Naive thymus-derived CD8-positive, alpha-beta T cell (primary cell): ENCODE measurements at regions of chr19 and their contacts with region 1.

Region 1: GRCh38 chr19:18000935-18001778 is 6.8 kb upstream of the ARRDC2 start:
- DNase-seq: peak; percentile 89 to 98 (median 96)
- ATAC-seq: peak; percentile 83
- H3K4me3 Mint-ChIP-seq: peak overlapping the region; percentile 86 to 96 (median 92)
- H3K27ac Mint-ChIP-seq: peak overlapping the region; percentile 97 to 100 (median 99)
- H3K4me1 Mint-ChIP-seq: peaks cover 9 to 38% (median 29%) of the 10 kb centered on the region in 4 donors
- H3K27me3 Mint-ChIP-seq: no peaks in the 10 kb centered on the region

Region 2: DNA sequence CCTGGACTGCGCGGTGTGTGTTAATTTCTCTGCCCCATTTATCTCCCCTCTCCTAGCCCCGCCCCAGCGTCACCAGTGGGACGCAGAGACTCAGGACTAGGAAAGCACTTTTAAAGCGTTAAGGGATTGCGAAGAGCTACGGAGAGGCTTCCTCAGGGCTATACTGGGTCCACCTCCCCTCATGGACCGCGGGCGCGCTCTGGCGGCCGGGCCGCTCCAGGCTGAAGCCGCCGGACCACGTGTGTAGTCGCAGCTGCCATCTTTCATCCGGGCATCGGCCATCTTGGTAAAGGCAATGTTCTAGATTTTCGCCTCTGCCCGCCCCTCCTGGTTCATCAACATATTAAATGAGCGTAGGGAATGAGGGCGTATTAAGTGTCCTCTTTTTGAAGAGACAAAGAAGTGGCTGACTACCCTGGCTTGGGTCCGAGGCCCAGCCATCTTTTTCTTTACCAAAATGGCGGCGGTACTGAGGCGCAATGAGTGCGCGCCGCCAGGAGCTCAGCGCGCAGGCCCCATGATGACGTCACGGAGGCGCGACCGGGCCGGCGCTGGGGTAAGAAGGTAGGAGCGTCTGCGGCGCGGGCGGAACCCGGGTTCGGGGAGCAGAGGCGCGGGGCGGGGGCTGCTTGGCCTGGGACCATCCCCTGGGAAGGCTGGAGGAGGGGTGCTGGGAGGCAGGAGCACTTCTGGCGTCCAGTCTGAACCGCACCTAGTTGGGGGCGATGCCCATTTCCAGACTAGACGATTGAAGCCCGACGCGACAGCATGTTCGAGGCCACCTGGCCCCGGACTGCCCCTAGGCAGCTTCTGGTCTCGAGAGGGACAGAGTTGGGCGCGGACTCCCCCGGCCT is 68.4 kb before region 1 on chr19 and contains the start of gene CCDC124:
- POLR2A ChIA-PET with region 1: interaction called, 37 read pairs
- DNase-seq: peak; percentile 87 to 96 (median 91)
- ATAC-seq: peak; percentile 97
- H3K4me3 Mint-ChIP-seq: peak within 1 kb of the TSS; percentile 86 to 97 (median 93)
- H3K27ac Mint-ChIP-seq: peak within 1 kb of the TSS; percentile 85 to 99 (median 97)
- H3K4me1 Mint-ChIP-seq: peaks cover 6 to 29% (median 23%) of the 10 kb centered on the region in 4 donors
- H3K27me3 Mint-ChIP-seq: peaks cover 0 to 3% (median 0%) of the 10 kb centered on the region in 5 donors
- polyA plus RNA-seq, gene CCDC124: 36.4 to 53.6 (median 43.5) TPM

Region 3: GRCh38 chr19:17947815-17948513 is 53.2 kb before region 1 on chr19:
- POLR2A ChIA-PET with region 1: interaction called, 20 read pairs
- DNase-seq: peak; percentile 89 to 99 (median 95)
- ATAC-seq: peak; percentile 58 to 71
- H3K4me3 Mint-ChIP-seq: peak overlapping the region; percentile 63 to 91 (median 80)
- H3K27ac Mint-ChIP-seq: peak overlapping the region in 7 of 10 donors; percentile 60 to 99 (median 92)
- H3K4me1 Mint-ChIP-seq: peaks cover 25 to 61% (median 50%) of the 10 kb centered on the region in 4 donors
- H3K27me3 Mint-ChIP-seq: peaks cover 11 to 36% (median 23%) of the 10 kb centered on the region in 5 donors

Region 4: GRCh38 chr19:18044825-18045304 is 43.7 kb after region 1 on chr19:
- POLR2A ChIA-PET with region 1: interaction called, 267 read pairs
- DNase-seq: peak; percentile 61 to 91 (median 80)
- ATAC-seq: peak; percentile 97 to 99
- H3K4me3 Mint-ChIP-seq: peak overlapping the region; percentile 77 to 89 (median 84)
- H3K27ac Mint-ChIP-seq: peak overlapping the region; percentile 87 to 99 (median 95)
- H3K4me1 Mint-ChIP-seq: peaks cover 19 to 55% (median 49%) of the 10 kb centered on the region in 4 donors
- H3K27me3 Mint-ChIP-seq: no peaks in the 10 kb centered on the region

Region 5: DNA sequence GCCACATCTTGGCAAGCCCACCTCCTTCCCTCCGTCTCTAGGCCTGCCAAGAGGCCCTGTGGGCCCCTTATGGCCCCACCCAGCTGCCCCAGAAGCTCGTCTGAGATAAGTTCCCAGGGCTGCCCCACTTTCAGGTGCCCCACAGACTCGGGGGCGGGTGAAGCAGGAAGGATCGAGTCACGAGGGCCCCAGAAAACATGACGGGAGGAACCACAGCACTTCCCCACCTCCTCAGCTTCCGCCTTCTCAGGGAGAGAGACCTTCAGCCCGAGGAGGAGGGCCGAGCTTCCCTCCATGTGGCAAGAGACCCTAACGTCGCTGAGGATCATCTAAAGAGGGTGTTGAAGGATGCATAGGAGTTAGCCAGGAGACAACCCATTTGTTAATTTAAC is 90.1 kb after region 1 on chr19:
- POLR2A ChIA-PET with region 1: interaction called, 27 read pairs
- DNase-seq: peak; percentile 64 to 91 (median 76)
- ATAC-seq: peak; percentile 75 to 78
- H3K4me3 Mint-ChIP-seq: peak overlapping the region; percentile 40 to 97 (median 72)
- H3K27ac Mint-ChIP-seq: peak overlapping the region; percentile 90 to 99 (median 97)
- H3K4me1 Mint-ChIP-seq: peaks cover 27 to 73% (median 59%) of the 10 kb centered on the region in 4 donors
- H3K27me3 Mint-ChIP-seq: no peaks in the 10 kb centered on the region

Region 6: DNA sequence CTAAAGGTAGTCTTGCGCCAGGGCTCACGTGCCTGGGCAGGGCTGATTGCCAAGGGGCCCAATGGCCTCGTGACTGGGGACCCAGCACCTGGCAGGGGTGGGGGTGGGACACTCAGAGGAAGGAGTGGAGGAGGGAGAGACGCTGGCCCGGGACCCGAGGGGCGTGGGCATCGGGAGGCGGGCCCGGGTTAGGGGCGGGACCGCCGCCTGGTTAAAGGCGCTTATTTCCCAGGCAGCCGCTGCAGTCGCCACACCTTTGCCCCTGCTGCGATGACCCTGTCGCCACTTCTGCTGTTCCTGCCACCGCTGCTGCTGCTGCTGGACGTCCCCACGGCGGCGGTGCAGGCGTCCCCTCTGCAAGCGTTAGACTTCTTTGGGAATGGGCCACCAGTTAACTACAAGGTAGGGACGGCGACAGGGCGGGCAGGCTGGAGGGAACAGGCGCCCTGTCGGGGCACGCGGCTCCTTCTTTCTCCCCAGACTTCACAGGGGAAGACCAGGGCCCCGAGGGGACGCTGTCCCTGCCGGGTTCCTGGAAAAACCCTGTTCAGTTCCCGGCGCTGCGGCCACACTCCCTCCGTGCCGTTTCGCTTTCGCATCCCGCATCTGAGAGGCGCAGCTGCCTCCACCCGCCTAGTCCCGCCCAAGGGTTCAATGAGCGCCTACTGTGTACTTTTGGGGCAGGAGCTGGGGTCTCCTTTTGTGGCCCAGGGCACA is 172.6 kb after region 1 on chr19 and contains the start of gene IFI30:
- POLR2A ChIA-PET with region 1: no interaction called
- DNase-seq: peak in 8 of 10 donors; percentile 41 to 75 (median 53)
- ATAC-seq: peak; percentile 85
- H3K4me3 Mint-ChIP-seq: peak within 1 kb of the TSS; percentile 85 to 93 (median 89)
- H3K27ac Mint-ChIP-seq: peak within 1 kb of the TSS; percentile 44 to 91 (median 78)
- H3K4me1 Mint-ChIP-seq: peaks cover 4 to 55% (median 16%) of the 10 kb centered on the region in 4 donors
- H3K27me3 Mint-ChIP-seq: no peaks in the 10 kb centered on the region
- polyA plus RNA-seq, gene IFI30: 3.3 to 7.1 (median 5.4) TPM